ENCODE measurements at regions of chrX and their contacts with region 1.

Region 1: GRCh38 chrX:153667956-153668396 is 5.6 kb downstream of the PNCK start:
- DNase-seq: peak; percentile 76 to 96
- H3K4me3 ChIP-seq: peak overlapping the region; percentile 41
- H3K4me1 ChIP-seq: peaks cover 2% of the 10 kb centered on the region; the same call in 1 of the 2 replicates
- H3K27me3 ChIP-seq: no peaks in the 10 kb centered on the region

Region 2: DNA sequence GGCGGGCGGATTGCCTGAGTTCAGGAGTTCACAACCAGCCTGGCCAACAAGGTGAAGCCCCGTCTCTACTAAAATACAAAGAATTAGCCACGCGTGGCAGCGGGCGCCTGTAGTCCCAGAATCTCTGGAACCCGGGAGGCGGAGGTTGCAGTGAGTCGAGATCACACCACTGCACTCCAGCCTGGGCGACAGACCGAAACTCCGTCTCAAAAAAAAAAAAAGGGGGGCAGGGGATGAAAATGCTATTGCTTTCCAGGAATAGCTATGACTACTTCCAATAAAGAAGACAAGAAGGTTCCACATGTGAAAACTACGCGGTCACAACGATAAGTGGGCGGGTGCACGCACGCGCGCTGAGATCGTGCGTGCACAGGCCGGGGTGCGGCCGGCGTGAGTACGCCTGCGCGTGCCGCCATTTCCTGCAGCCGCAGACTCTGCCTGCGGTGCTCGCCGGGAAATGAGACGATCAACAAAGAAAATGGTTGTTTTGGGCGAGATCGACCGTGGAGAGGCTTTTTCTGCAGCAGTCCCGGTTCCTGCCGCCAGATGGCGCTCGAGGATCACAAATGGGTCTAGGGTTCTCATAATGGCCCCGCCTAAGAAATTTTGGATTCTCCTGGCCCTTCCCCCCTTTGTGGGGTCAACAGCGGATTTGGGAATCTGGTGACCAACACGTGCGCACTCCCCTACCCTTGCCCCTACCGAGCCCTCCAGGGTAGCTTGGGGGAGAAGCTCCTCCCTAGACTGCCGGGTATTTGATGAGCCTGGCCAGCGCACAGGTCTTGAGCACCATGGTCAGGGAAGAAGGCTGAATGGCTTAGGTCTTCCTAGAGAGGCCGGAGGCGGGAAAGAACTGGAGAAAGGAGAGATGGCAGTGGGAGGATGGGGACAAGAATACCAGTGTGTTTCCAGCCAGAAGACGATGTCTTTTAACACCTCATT is 709.2 kb before region 1 on chrX:
- in situ Hi-C with region 1: loop called (anchors 25 kb)
- DNase-seq: peak; percentile 86 to 96
- H3K4me3 ChIP-seq: no peak overlapping the region
- H3K4me1 ChIP-seq: peaks cover 4% of the 10 kb centered on the region; the same call in 1 of the 2 replicates
- H3K27me3 ChIP-seq: no peaks in the 10 kb centered on the region

Region 3: DNA sequence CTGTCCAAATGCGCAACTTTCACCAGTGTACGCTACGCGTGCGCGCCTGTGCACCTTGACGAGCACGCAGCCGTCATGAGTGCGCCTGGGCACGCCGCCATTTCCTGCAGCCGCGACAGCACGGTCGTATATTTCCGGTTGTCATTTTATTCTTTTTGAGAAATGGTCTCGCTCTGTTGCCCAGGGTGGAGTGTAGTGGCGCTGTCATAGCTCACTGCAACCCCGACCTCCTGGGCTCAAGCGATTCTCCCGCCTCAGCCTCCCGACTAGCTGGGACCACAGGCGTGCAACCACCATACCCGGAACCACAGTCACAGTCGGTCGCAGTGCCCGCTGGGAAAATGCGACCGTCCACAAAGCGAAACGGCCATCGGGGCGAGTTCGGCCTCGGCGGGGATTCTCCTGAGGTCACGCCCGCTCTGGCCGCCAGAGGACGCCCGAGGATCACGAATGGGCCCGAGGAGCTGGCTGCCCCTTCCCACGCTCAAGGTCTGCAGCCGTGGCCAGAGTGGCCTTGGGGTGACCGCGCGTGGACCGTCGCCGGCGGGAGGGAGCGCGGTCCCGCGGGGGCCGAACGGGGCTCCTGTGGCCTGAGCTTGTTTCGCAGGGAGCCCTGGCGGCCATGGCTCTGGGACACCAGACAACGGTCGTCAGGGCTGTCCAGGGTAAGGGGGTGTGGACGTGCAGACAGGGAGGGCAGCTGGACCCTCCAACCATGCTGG is 635.4 kb before region 1 on chrX:
- in situ Hi-C with region 1: loop called (anchors 10 kb)
- DNase-seq: peak; percentile 36 to 87
- H3K4me3 ChIP-seq: no peak overlapping the region; the same call in 1 of the 2 replicates
- H3K4me1 ChIP-seq: peaks cover 4% of the 10 kb centered on the region; the same call in 1 of the 2 replicates
- H3K27me3 ChIP-seq: no peaks in the 10 kb centered on the region

Region 4: GRCh38 chrX:153456161-153456560 is 211.8 kb before region 1 on chrX:
- in situ Hi-C with region 1: no loop called
- DNase-seq: no peak
- H3K4me3 ChIP-seq: no peak overlapping the region
- H3K4me1 ChIP-seq: no peaks in the 10 kb centered on the region
- H3K27me3 ChIP-seq: no peaks in the 10 kb centered on the region

Region 5: GRCh38 chrX:153539171-153539978 is 128.6 kb before region 1 on chrX:
- in situ Hi-C with region 1: loop called (anchors 5 kb)
- DNase-seq: peak; percentile 60 to 91
- H3K4me3 ChIP-seq: no peak overlapping the region
- H3K4me1 ChIP-seq: no peaks in the 10 kb centered on the region
- H3K27me3 ChIP-seq: no peaks in the 10 kb centered on the region

Measured in HAP-1 (cell line).